Activated T-helper 1 cell treated with anti-CD3 and anti-CD28 coated beads, Interleukin-12 subunit alpha, Interleukin-12 subunit beta, Interleukin-2, Interleukin-4 antibody, amounts not matched to agents 30 ng/mL and 10 ng/mL and 1 ng/mL, durations not matched to agents 14 hours and 24 hours and 36 hours (primary cell): ENCODE measurements at regions of chr21 and their contacts with region 1.

Region 1: DNA sequence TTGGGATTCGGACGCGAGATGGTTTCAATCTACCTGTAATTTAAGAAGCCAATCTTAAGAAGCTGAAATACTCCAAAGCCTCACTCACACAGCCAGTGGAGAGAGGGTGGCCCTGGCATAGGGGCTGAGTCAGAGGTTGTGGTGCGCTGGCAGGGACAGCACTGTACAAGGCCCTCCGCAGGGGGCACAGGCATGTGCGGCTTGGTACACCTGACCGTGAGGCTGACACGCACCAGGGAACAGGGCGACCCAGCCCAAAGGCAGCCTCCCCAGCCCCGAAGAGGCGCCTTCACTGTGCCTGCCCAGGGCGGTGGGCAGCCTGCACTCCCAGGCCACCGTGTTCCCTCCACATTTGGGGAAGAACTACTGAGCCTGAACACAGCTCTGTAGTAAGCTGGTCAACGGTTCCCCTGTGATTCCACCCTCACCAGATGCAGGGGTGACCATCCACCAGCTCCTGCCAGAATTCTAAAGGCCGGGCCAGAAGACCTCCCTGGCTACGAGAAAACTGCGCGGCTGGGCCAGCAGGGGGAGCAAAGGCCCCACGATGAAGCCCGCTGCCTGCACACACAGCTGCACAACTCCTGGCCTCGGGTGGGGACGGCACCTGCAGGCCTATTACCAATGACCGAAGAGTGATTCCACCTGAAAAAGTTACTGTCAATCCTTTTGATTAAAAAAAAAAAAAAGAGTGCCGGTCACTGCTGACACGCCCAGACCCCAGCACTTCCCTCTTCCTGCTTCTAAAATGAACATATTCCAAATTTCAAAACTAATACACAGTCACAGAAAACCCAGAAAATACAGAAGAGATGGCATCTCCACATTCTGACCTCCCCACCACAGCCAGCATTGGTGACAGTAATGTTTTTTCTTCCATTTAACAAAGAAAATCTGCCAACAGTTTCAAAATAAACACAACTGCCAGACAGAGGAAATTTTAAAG is 49.6 kb upstream of the RIPK4 start:
- DNase-seq: peak; percentile 22
- H3K4me3 Mint-ChIP-seq: no peak overlapping the region
- H3K27ac Mint-ChIP-seq: no peak overlapping the region
- H3K4me1 Mint-ChIP-seq: no peaks in the 10 kb centered on the region
- H3K27me3 Mint-ChIP-seq: no peaks in the 10 kb centered on the region

Region 2: DNA sequence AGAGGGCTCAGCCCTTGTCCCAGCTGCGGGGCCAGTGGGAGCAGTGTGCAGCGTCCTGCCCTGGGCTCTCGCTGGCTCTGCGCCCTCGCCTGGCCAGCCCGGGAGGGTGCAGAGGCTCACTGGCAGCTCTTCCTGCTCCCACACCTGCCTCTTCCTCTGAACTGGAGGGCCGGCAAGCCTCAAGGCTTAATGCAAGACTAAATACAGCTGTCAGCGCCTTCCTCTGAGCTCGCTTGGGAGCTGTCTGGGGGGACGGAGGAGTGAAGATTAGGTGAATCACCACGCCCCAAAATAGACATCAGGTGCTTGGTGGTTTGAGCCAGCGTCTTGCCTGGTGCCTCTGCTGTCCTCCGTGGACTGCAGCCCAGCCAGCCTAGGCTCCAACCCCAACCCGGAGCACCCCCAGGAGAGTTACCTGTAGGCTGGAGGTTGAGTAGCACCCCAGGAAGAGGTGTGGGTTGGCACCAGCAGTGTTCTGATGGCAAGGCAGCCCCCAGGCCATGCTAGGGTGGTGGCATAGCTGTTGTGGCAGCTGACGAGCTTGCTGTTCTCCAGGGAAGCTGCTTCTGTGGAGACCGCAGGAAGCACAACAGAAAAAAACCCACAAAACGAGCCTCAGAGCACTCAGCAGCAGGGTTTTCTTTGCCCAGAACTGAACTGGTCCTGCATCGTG is 291.5 kb after region 1 on chr21:
- intact Hi-C with region 1: loop called (anchors 1 kb)
- DNase-seq: peak; percentile 50
- H3K4me3 Mint-ChIP-seq: no peak overlapping the region
- H3K27ac Mint-ChIP-seq: no peak overlapping the region
- H3K4me1 Mint-ChIP-seq: peaks cover 7% of the 10 kb centered on the region
- H3K27me3 Mint-ChIP-seq: peaks cover 14% of the 10 kb centered on the region

Region 3: DNA sequence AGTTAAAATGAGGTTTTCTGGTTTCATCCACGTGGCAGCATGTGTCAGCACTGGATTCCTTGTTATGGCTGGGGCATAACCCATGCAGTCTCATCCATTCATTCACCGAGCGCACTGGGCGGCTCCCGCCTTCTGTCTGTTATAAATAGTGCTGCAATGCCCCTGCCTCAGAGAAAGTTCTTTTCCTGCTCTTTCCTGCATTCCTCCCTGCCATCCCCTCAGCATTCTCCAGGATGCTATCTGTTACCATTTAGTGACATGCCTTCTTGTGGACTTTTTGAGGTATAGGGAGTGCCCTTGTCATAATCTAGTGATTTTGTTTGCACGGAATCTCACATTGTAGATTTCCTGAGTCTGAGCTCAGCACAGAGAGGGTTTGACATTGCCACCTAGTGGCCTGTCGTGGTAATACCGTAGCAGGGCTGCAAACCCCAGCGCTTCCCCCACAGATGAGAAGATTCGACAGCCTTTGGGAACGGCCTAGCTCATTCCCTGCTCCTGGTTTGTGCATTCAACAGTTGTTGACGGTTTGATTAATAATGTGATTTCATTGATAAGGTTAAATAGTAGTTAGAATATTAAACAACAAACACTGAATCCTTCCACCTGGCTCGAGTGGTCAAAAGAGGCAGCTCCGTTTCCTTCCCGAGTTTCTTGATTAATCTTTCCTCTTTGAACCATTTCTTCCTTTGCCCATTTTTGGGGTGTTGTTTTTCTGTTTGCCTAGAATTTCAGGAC is 300.9 kb after region 1 on chr21:
- intact Hi-C with region 1: loop called (anchors 1 kb)
- DNase-seq: peak; percentile 47
- H3K4me3 Mint-ChIP-seq: no peak overlapping the region
- H3K27ac Mint-ChIP-seq: no peak overlapping the region
- H3K4me1 Mint-ChIP-seq: peaks cover 13% of the 10 kb centered on the region
- H3K27me3 Mint-ChIP-seq: peaks cover 38% of the 10 kb centered on the region